AG04449 (cell line): ENCODE measurements at regions of chr12 and their contacts with region 1.

Region 1: GRCh38 chr12:57213058-57213715 is 3.4 kb upstream of the NXPH4 start:
- DNase-seq: no peak
- H3K4me3 ChIP-seq: no peak overlapping the region
- CTCF ChIP-seq: peak; percentile 89

Region 2: DNA sequence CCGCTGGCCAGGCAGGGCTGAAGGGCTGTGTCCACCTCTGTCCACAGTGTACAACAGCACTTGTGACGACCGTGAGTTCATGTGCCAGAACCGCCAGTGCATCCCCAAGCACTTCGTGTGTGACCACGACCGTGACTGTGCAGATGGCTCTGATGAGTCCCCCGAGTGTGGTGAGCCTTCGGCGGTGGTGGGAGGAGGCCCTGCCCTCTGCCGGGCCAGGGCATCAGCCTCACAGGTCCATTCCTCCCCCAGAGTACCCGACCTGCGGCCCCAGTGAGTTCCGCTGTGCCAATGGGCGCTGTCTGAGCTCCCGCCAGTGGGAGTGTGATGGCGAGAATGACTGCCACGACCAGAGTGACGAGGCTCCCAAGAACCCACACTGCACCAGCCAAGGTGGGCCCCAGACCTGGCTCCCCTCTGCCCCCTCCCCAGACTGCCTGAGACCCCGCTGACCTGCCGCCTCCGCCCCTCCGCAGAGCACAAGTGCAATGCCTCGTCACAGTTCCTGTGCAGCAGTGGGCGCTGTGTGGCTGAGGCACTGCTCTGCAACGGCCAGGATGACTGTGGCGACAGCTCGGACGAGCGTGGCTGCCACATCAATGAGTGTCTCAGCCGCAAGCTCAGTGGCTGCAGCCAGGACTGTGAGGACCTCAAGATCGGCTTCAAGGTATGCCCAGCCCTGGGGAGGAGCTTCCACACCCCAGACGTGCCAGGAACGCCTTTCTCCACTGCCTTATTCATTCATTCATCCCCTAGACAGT is 17.4 kb before region 1 on chr12:
- CTCF ChIA-PET with region 1: interaction called, 63 read pairs
- POLR2A ChIA-PET with region 1: interaction called, 4 read pairs
- DNase-seq: no peak
- H3K4me3 ChIP-seq: no peak overlapping the region
- CTCF ChIP-seq: no peak

Region 3: GRCh38 chr12:57238854-57239554 is 25.8 kb after region 1 on chr12:
- CTCF ChIA-PET with region 1: interaction called, 393 read pairs
- POLR2A ChIA-PET with region 1: interaction called, 16 read pairs
- DNase-seq: no peak
- H3K4me3 ChIP-seq: peak overlapping the region; percentile 69
- CTCF ChIP-seq: peak; percentile 100

Region 4: DNA sequence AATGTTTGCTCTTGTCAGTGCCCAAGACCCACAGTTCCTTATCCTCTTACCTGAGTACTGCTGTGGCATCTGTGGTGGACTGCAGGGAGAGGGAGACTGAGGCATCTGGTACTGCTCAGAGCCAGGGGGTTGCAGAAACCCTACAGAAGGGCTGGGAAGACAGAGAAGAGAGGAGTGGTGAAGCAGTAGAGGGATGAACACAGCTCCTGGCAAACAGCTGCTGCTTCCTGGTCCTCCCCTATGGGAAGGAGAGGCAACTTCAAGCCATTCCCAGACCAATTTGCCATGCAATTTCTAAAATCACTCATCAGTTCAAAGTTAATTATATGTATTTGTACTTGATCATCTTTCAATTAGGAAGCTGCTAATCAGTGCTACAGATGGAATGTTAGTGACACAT is 53.5 kb after region 1 on chr12:
- CTCF ChIA-PET with region 1: interaction called, 16 read pairs
- POLR2A ChIA-PET with region 1: interaction called, 3 read pairs
- DNase-seq: no peak
- H3K4me3 ChIP-seq: no peak overlapping the region
- CTCF ChIP-seq: no peak

Region 5: GRCh38 chr12:57452937-57453509 is 239.8 kb after region 1 on chr12:
- CTCF ChIA-PET with region 1: interaction called, 26 read pairs
- POLR2A ChIA-PET with region 1: interaction called, 3 read pairs
- DNase-seq: no peak
- H3K4me3 ChIP-seq: no peak overlapping the region
- CTCF ChIP-seq: peak; percentile 94

Region 6: DNA sequence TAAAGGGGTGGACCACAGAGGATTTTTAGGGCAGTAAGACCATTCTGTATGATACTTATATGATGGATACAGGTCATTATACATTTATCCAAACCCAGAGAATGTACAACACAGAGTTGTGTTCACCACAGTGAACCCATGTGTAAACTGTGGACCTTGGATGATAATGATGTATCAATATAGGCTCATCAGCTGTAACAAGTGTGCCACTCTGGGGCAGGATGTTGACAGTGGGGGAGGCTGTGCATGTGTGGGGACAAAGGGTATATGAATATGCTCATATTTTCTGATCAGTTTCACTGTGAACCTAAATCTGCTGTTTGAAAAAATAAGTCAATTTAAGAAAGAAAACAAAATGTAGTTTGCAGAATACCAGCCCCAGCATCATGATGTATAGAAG is 466.5 kb after region 1 on chr12:
- CTCF ChIA-PET with region 1: no interaction called
- POLR2A ChIA-PET with region 1: no interaction called
- DNase-seq: no peak
- H3K4me3 ChIP-seq: no peak overlapping the region
- CTCF ChIP-seq: no peak